Activated CD8-positive, alpha-beta memory T cell treated with anti-CD3 and anti-CD28 coated beads, Interleukin-2, amount 10 ng/mL, durations not matched to agents 7 days and 5 days (primary cell): ENCODE measurements at regions of chr12 and their contacts with region 1.

Region 1: DNA sequence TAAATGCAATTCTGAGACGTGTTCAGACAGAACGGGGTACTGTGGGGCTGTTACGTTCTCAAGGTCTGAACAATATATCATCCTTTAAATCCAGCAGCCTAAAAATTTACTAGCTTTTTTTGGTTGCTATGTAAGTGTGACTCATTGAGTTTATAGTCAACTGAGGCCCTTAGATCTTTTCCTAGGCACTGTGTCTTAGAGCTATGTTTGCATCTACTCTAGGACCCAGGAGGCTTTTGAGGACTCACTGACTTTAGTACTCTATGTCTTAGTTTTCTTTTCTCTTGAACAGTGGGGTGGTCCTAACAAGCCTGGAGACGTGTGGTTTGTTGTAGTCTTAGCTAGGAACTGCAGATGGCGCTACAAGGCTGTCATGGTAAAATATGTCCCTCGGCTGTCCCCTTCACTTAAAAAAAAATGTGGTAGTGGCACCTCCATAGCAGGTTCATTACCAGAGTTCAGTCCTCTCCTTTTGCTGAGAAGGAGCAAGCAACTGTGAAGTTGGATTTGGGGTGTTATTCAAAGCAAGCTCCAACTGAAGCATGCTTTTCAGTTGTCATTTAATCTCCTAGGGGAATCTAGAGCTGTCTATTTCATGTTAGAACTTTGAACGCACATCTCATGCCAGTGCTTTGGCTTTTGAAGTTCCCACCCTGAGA is 8.7 kb upstream of the SPATS2 start:
- DNase-seq: peak; percentile 75
- ATAC-seq: peak; percentile 96
- H3K4me3 Mint-ChIP-seq: no peak overlapping the region
- H3K27ac Mint-ChIP-seq: no peak overlapping the region
- H3K4me1 Mint-ChIP-seq: peaks cover 6% of the 10 kb centered on the region
- H3K27me3 Mint-ChIP-seq: peaks cover 49% of the 10 kb centered on the region

Region 2: GRCh38 chr12:49288412-49288853 is 70.2 kb before region 1 on chr12:
- CTCF ChIA-PET with region 1: interaction called, 35 read pairs
- DNase-seq: peak; percentile 84
- ATAC-seq: peak; percentile 70
- H3K4me3 Mint-ChIP-seq: no peak overlapping the region
- H3K27ac Mint-ChIP-seq: no peak overlapping the region
- H3K4me1 Mint-ChIP-seq: peaks cover 3% of the 10 kb centered on the region
- H3K27me3 Mint-ChIP-seq: peaks cover 41% of the 10 kb centered on the region

Region 3: GRCh38 chr12:49322708-49323523 is 35.7 kb before region 1 on chr12 and contains the start of gene TROAP:
- CTCF ChIA-PET with region 1: interaction called, 12 read pairs
- DNase-seq: peak; percentile 99
- ATAC-seq: peak; percentile 98
- H3K4me3 Mint-ChIP-seq: peak within 1 kb of the TSS; percentile 97
- H3K27ac Mint-ChIP-seq: peak within 1 kb of the TSS; percentile 98
- H3K4me1 Mint-ChIP-seq: peaks cover 28% of the 10 kb centered on the region
- H3K27me3 Mint-ChIP-seq: no peaks in the 10 kb centered on the region
- total RNA-seq, gene TROAP: 89.5 to 107 TPM

Region 4: GRCh38 chr12:49342066-49342913 is 16.3 kb before region 1 on chr12:
- CTCF ChIA-PET with region 1: interaction called, 91 read pairs
- DNase-seq: peak; percentile 85
- ATAC-seq: peak; percentile 80
- H3K4me3 Mint-ChIP-seq: no peak overlapping the region
- H3K27ac Mint-ChIP-seq: no peak overlapping the region
- H3K4me1 Mint-ChIP-seq: peaks cover 34% of the 10 kb centered on the region
- H3K27me3 Mint-ChIP-seq: peaks cover 86% of the 10 kb centered on the region

Region 5: DNA sequence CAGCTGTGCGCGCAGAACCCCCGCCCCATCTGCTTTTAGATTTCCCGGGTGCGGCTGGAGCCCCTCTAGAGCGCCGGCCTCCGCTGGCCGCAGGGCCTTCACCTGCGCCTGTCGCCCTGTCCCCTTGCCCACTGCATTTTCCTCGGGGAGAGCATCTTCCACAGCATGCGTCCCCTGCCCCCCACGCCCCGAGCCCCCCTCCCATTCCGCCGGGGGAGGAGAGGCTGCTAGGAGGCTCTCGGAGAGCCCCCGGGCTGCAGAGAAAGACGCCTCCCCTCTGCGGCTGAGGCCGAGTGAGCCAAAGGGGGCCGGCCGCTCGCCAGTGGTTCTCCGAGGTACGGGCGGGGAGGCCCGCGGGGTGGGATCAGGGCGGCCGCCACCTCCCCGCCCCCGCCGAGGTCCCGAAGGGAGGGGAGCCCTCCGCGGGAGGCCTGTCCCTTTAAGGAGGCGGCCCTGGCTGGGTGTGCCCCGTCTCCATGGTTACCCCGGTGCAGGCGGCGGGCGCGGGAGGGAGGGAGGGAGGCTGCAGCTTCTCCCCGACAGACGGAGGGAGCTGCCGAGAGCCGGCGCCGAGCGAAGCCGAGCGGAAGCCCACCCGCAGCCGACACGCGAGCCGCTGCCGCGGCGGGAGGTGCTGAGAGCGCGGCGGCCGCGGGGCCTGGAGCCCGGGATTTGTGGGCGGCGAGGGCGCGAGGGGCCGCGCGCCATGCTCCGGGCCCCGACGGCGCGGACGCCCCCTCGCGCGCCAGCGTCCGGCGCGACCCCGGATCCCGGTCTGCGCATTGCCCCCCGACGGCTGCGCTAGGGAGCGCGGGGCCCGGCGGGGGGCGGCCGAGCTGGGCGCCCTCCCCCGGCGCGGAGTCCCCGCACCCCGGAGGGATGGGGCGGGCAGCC is 180.1 kb after region 1 on chr12 and contains the start of gene KCNH3:
- CTCF ChIA-PET with region 1: interaction called, 16 read pairs
- DNase-seq: peak; percentile 95
- ATAC-seq: peak; percentile 92
- H3K4me3 Mint-ChIP-seq: peak within 1 kb of the TSS; percentile 49
- H3K27ac Mint-ChIP-seq: no peak within 1 kb of the TSS
- H3K4me1 Mint-ChIP-seq: peaks cover 14% of the 10 kb centered on the region
- H3K27me3 Mint-ChIP-seq: peaks cover 53% of the 10 kb centered on the region
- total RNA-seq, gene KCNH3: 1.1 to 1.2 TPM

Region 6: GRCh38 chr12:49580572-49581535 is 222.2 kb after region 1 on chr12:
- CTCF ChIA-PET with region 1: interaction called, 39 read pairs
- DNase-seq: peak; percentile 79
- ATAC-seq: peak; percentile 87
- H3K4me3 Mint-ChIP-seq: no peak overlapping the region
- H3K27ac Mint-ChIP-seq: no peak overlapping the region
- H3K4me1 Mint-ChIP-seq: peaks cover 20% of the 10 kb centered on the region
- H3K27me3 Mint-ChIP-seq: no peaks in the 10 kb centered on the region